ENCODE measurements at regions of chr3 and their contacts with region 1.

Region 1: GRCh38 chr3:64399205-64399800 is 174.0 kb upstream of the PRICKLE2 start:
- DNase-seq: peak; percentile 78
- H3K4me3 Mint-ChIP-seq: no peak overlapping the region
- H3K27ac Mint-ChIP-seq: no peak overlapping the region
- H3K4me1 Mint-ChIP-seq: no peaks in the 10 kb centered on the region
- H3K27me3 Mint-ChIP-seq: no peaks in the 10 kb centered on the region

Region 2: DNA sequence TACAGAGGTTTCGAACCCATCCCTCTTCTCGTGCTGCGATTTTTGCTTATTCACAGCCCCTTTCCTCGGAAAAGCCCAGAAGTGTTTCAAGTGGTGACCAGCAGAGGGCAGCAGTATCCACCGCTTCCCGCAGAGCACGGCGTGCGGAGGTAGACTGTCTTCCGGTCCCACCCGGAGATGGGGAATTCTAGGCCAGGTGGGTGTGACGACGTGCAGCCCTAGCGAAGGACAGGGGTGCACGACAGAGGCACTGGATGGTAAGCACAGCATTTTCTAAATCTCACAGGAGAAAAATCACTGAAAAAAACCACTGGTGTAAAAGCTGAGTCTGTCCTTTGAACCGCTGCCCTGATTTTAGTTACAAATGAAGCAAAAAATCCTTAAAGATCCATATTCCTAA is 368.6 kb before region 1 on chr3:
- intact Hi-C with region 1: loop called (anchors 1 kb)
- DNase-seq: peak; percentile 93
- H3K4me3 Mint-ChIP-seq: peak overlapping the region; percentile 76
- H3K27ac Mint-ChIP-seq: peak overlapping the region; percentile 62
- H3K4me1 Mint-ChIP-seq: peaks cover 11% of the 10 kb centered on the region
- H3K27me3 Mint-ChIP-seq: peaks cover 44% of the 10 kb centered on the region

Region 3: DNA sequence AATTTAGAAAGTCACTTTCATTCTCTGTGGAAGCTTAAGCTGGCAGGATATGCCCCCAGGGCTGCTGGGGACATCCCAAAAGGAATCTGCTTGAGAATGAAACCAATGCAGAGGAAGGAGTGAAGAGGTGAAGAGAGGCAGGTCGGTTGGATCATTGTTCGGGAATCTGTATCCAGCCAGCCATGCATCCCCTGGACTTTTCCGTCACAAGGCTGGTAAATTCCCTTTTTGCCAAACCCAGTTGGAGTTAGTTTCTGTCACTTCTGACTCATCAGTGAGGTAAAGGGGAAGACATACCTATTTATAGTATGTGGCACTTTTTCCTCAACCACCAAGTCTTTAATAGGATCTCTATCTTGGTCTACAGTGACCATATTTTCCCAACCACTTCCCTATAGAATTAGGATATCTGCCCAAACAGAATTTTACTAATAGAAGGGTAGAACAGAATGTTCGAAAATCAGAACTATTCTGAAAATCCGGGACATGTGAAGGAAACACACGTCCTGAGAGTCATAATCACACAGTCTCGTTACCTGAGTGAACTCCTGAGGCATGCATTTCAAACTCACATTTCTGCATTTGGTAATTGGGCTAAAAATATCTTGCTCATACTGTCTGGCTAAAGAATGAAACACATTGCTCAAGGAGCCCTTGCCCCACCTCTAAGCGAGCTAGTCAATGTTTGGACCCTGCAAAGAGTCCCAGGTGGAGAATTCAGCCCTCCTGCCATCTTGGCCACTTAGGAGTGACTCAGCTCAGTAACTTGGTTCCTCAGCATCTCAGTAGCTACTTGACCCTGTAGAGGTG is 578.2 kb after region 1 on chr3:
- intact Hi-C with region 1: no loop called
- DNase-seq: no peak
- H3K4me3 Mint-ChIP-seq: no peak overlapping the region
- H3K27ac Mint-ChIP-seq: no peak overlapping the region
- H3K4me1 Mint-ChIP-seq: peaks cover 5% of the 10 kb centered on the region
- H3K27me3 Mint-ChIP-seq: no peaks in the 10 kb centered on the region